AG04450 (cell line): ENCODE measurements at regions of chr2 and their contacts with region 1.

Region 1: GRCh38 chr2:46915811-46916630 is 415 bp upstream of the MCFD2 start:
- DNase-seq: peak; percentile 72
- H3K4me3 ChIP-seq: peak overlapping the region; percentile 94
- H3K27ac ChIP-seq: peak overlapping the region; percentile 68
- H3K27me3 ChIP-seq: no peaks in the 10 kb centered on the region
- CTCF ChIP-seq: no peak

Region 2: GRCh38 chr2:46929612-46930011 is 13.6 kb after region 1 on chr2:
- CTCF ChIA-PET with region 1: interaction called, 31 read pairs
- POLR2A ChIA-PET with region 1: no interaction called
- DNase-seq: no peak
- H3K4me3 ChIP-seq: no peak overlapping the region
- H3K27ac ChIP-seq: no peak overlapping the region
- H3K27me3 ChIP-seq: no peaks in the 10 kb centered on the region
- CTCF ChIP-seq: no peak

Region 3: DNA sequence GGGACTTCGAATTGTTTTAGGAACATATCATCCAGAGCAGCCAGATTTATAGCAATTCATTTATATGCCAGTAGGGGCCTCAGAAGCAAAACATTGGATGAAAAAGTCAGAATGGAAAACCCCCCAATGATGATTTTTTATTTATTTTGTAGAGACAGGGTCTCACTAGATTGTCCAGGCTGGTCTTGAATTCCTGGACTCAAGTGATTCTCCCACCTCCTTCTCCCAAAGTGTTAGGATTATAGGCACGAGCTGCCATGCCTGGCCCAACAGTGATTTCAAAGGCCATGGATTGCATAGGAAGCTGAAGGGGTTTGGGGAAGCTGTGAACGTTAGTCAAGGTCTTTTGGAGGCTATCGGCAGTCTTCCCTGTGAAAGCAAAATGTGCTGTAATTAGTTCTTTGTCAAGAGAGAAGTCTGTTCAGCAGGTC is 21.5 kb after region 1 on chr2:
- CTCF ChIA-PET with region 1: interaction called, 31 read pairs
- POLR2A ChIA-PET with region 1: no interaction called
- DNase-seq: no peak
- H3K4me3 ChIP-seq: no peak overlapping the region
- H3K27ac ChIP-seq: no peak overlapping the region
- H3K27me3 ChIP-seq: no peaks in the 10 kb centered on the region
- CTCF ChIP-seq: peak; percentile 45